CD8-positive, alpha-beta T cell (primary cell): ENCODE measurements at regions of chr14 and their contacts with region 1.

Region 1: GRCh38 chr14:92951912-92952471 is 29.0 kb downstream of the CHGA start:
- DNase-seq: peak; percentile 69 to 92 (median 82)
- ATAC-seq: peak; percentile 98
- H3K4me3 ChIP-seq: no peak overlapping the region
- H3K4me3 Mint-ChIP-seq: no peak overlapping the region
- H3K27ac ChIP-seq: no peak overlapping the region
- H3K27ac Mint-ChIP-seq: no peak overlapping the region
- H3K4me1 ChIP-seq: no peaks in the 10 kb centered on the region
- H3K4me1 Mint-ChIP-seq: peaks cover 4% of the 10 kb centered on the region
- H3K27me3 ChIP-seq: no peaks in the 10 kb centered on the region
- H3K27me3 Mint-ChIP-seq: no peaks in the 10 kb centered on the region
- CTCF ChIP-seq: peak; percentile 93

Region 2: DNA sequence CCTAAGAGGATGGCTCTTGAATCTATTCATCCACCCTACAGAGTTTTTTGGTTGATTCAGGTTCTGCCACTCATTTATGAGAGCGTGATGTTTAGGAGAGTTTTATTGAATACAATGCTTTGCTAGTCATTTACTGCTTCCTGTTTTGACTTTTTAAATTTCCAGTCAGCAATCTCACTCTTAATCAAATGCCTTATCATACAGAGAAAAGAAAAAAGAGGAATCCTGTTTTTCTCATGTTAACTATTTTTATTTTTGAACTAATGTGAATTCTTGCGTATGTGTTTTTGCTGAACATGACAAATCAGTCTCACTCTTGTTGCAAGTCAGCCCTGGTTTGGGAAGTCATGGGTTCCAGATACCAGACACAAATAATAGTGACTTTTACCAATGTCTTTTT is 181.5 kb before region 1 on chr14:
- CTCF ChIA-PET with region 1: no interaction called
- POLR2A ChIA-PET with region 1: no interaction called
- intact Hi-C with region 1: no loop called
- DNase-seq: no peak
- ATAC-seq: no peak
- H3K4me3 ChIP-seq: no peak overlapping the region
- H3K4me3 Mint-ChIP-seq: no peak overlapping the region
- H3K27ac ChIP-seq: no peak overlapping the region
- H3K27ac Mint-ChIP-seq: no peak overlapping the region
- H3K4me1 ChIP-seq: no peaks in the 10 kb centered on the region
- H3K4me1 Mint-ChIP-seq: no peaks in the 10 kb centered on the region
- H3K27me3 ChIP-seq: no peaks in the 10 kb centered on the region
- H3K27me3 Mint-ChIP-seq: no peaks in the 10 kb centered on the region
- CTCF ChIP-seq: no peak

Region 3: GRCh38 chr14:93033983-93034670 is 82.1 kb after region 1 on chr14:
- CTCF ChIA-PET with region 1: interaction called, 8 read pairs
- POLR2A ChIA-PET with region 1: no interaction called
- intact Hi-C with region 1: loop called in 1 of 2 experiments (anchors 2 kb)
- DNase-seq: peak; percentile 19 to 82 (median 65)
- ATAC-seq: peak; percentile 89
- H3K4me3 ChIP-seq: peak overlapping the region in 1 of 2 experiments; percentile 38
- H3K4me3 Mint-ChIP-seq: peak overlapping the region; percentile 77
- H3K27ac ChIP-seq: peak overlapping the region; percentile 49 to 54
- H3K27ac Mint-ChIP-seq: peak overlapping the region; percentile 88
- H3K4me1 ChIP-seq: peaks cover 29% of the 10 kb centered on the region
- H3K4me1 Mint-ChIP-seq: peaks cover 36% of the 10 kb centered on the region
- H3K27me3 ChIP-seq: no peaks in the 10 kb centered on the region
- H3K27me3 Mint-ChIP-seq: no peaks in the 10 kb centered on the region
- CTCF ChIP-seq: peak; percentile 74

Region 4: GRCh38 chr14:93137864-93138263 is 185.9 kb after region 1 on chr14:
- CTCF ChIA-PET with region 1: interaction called, 166 read pairs
- POLR2A ChIA-PET with region 1: no interaction called
- intact Hi-C with region 1: loop called in 1 of 2 experiments (anchors 1 kb)
- DNase-seq: no peak
- ATAC-seq: no peak
- H3K4me3 ChIP-seq: no peak overlapping the region
- H3K4me3 Mint-ChIP-seq: no peak overlapping the region
- H3K27ac ChIP-seq: no peak overlapping the region
- H3K27ac Mint-ChIP-seq: no peak overlapping the region
- H3K4me1 ChIP-seq: no peaks in the 10 kb centered on the region
- H3K4me1 Mint-ChIP-seq: peaks cover 2% of the 10 kb centered on the region
- H3K27me3 ChIP-seq: no peaks in the 10 kb centered on the region
- H3K27me3 Mint-ChIP-seq: no peaks in the 10 kb centered on the region
- CTCF ChIP-seq: no peak

Region 5: DNA sequence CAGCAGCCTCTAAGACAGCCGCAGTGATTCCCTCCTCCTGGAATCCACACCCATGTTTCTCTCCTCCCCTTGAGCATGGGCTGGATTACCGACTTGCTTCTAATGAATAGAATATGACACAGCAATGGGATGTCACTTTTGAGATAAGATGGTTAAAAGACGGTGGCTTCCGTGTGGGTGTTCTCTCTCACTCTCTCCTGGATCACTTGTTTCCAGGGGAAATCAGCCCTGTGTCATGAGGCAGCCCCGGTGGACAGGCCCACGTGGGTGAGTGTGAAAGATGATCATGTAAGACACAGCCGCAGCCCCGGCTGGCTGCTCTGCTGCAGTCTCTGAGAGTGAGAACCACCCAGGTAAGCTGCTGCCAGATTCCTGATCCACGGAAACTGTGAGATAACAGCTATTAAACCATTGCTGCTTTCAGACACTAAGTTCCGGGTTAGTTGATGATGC is 222.0 kb after region 1 on chr14:
- CTCF ChIA-PET with region 1: interaction called, 28 read pairs
- POLR2A ChIA-PET with region 1: no interaction called
- intact Hi-C with region 1: loop called (anchors 1 kb)
- DNase-seq: no peak
- ATAC-seq: no peak
- H3K4me3 ChIP-seq: no peak overlapping the region
- H3K4me3 Mint-ChIP-seq: no peak overlapping the region
- H3K27ac ChIP-seq: no peak overlapping the region
- H3K27ac Mint-ChIP-seq: no peak overlapping the region
- H3K4me1 ChIP-seq: no peaks in the 10 kb centered on the region
- H3K4me1 Mint-ChIP-seq: peaks cover 4% of the 10 kb centered on the region
- H3K27me3 ChIP-seq: no peaks in the 10 kb centered on the region
- H3K27me3 Mint-ChIP-seq: no peaks in the 10 kb centered on the region
- CTCF ChIP-seq: no peak

Region 6: DNA sequence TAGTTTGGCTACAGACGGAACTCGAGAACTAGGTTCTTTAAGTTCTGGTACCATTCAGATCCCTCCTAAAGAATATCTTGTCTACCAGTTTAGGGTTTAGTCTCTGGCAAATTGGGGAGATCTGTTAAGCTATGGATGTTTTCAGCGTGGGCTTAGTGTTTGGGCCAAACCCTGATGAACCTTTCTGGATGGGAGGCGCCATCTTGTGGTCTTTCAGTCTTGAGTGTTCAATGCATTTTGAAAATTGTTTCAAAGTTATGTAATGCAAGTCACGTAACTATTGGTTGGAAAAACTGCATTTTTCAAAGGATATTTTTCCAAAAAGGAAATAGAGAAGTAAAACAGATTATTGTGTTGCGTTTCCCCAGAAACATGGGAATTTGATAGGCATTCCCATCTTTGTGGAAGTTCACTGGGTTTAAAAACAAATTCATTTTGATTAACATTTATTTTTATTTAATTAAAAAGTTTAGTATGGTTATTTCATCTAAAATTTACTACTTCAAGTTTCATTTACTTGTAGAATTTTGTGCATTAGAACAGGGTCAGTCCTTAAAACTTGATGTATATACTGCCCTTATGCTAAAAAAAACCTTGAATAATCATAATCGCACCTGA is 667.3 kb after region 1 on chr14:
- CTCF ChIA-PET with region 1: no interaction called
- POLR2A ChIA-PET with region 1: no interaction called
- intact Hi-C with region 1: loop called (anchors 5 kb)
- DNase-seq: peak in 2 of 9 experiments; percentile 11 to 28
- ATAC-seq: no peak
- H3K4me3 ChIP-seq: no peak overlapping the region
- H3K4me3 Mint-ChIP-seq: no peak overlapping the region
- H3K27ac ChIP-seq: no peak overlapping the region
- H3K27ac Mint-ChIP-seq: no peak overlapping the region
- H3K4me1 ChIP-seq: no peaks in the 10 kb centered on the region
- H3K4me1 Mint-ChIP-seq: no peaks in the 10 kb centered on the region
- H3K27me3 ChIP-seq: no peaks in the 10 kb centered on the region
- H3K27me3 Mint-ChIP-seq: peaks cover 5% of the 10 kb centered on the region
- CTCF ChIP-seq: no peak